Spleen (tissue), 13 donors: ENCODE measurements at regions of chr2 and their contacts with region 1.

Region 1: DNA sequence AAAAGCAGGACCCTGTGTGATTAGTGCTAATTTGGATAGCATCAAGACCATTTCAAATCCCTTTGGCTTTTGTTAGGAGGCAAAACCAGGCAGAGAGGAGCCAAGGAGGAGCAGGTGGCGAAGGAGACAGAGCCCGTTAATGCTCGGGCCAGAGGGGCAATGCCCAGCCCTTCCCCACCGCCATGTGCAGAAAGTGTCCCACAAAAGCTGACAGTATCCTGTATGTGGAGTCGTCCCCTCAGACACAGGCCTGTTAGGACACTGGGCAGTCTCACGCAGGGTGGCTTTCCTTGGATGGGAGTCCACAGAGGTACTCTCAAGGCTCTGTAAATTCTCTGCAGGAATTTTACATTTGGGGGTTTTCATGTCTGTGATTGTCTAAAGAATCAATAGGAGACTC is 44.8 kb upstream of the TFCP2L1 start:
- DNase-seq: no peak
- H3K4me3 ChIP-seq: no peak overlapping the region
- H3K27ac ChIP-seq: no peak overlapping the region
- H3K4me1 ChIP-seq: no peaks in the 10 kb centered on the region
- H3K27me3 ChIP-seq: peaks cover 0 to 6% (median 0%) of the 10 kb centered on the region in 7 donors
- CTCF ChIP-seq: no peak
- POLR2A ChIP-seq: no peak

Region 2: DNA sequence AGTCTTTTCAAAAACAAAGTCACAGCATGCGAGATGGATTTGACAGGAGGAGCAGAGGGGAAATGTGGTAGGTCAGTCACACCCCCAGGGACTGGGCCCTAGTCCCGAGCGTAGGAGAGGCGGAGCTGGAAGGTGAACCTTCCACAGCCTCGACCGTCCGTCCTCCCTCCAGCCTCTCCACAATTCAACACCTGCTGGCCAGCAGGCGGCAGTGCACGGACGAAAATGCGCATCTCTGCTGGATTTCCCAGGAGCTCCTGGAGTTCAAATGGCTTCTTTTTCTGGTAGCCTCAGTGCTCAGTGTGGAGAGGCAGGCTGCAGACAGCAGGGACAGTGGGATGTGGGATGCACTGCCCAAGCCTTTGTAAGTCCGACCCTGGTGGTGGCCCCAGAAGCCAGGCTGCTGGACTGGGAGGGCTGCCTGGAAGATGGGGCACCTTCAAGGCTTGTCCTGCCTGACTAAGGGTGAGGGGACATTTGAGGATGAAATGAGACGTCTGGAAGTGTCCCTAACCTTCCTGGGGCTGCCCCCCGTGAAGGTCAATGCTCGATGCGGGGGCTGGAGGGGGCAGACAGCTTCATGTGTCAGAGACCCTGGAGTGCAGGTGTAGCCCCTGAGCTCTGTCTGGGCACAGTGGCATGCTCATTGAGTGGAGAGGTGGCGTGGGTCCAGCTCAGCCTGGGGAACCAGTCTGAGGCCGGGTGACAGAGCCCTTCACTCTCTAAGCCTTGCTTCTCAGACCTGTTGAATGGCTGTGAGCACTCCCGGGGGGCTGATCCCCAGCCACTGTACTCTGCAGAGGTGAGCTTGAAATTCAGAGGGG is 234.3 kb before region 1 on chr2:
- intact Hi-C with region 1: loop called (anchors 10 kb)
- DNase-seq: peak; percentile 78
- H3K4me3 ChIP-seq: no peak overlapping the region
- H3K27ac ChIP-seq: no peak overlapping the region
- H3K4me1 ChIP-seq: no peaks in the 10 kb centered on the region
- H3K27me3 ChIP-seq: peaks cover 0 to 27% (median 0%) of the 10 kb centered on the region in 7 donors
- CTCF ChIP-seq: peak in 9 of 11 experiments; percentile 23 to 67 (median 56)
- POLR2A ChIP-seq: no peak

Region 3: GRCh38 chr2:121640385-121641316 is 310.9 kb after region 1 on chr2:
- intact Hi-C with region 1: no loop called
- DNase-seq: no peak
- H3K4me3 ChIP-seq: no peak overlapping the region
- H3K27ac ChIP-seq: no peak overlapping the region
- H3K4me1 ChIP-seq: peaks cover 3 to 56% (median 22%) of the 10 kb centered on the region in 6 donors
- H3K27me3 ChIP-seq: no peaks in the 10 kb centered on the region
- CTCF ChIP-seq: no peak
- POLR2A ChIP-seq: no peak